ENCODE measurements at regions of chr9 and their contacts with region 1.

Region 1: DNA sequence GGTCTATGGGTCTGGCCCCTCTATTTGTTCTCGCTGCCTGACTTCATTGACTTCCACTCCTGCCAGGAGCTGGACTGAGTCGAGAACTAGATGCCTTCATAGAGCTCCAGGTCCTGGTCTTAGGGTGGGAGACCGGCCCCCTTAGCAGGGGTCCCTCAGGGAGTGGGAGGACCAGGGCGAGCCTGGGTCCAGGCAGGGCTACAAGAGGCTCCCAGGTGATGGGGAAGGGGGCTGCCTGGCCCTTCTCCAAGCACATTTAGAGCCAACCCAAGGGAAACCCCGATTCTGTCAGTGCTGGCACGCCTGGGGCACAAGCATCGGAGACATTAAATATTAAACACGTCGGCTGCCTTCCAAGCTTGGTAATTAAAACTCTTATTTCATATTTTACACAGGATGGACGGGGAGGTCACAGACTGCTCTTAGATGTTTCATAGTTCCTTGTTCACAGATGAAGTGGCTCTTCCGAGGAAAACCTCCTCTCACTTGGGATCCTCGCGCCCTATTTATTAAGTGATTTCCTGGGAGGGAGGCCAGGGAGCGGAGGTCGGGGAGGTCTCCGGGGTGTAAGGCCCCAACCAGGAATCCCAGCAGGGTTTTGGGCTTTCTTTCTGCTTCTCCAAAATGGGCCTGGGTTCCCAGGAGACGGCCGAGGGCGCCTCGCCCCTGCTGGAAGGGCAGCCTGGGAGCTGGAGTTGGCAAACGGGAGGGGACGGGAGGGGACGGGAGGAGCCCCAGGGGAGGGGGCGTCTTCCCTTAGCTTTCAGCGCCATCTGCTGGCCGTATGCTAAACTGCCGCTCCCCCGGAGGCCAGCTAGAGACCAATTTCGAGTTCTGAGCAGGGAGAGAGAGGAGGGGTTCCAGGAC is 23.4 kb upstream of the ZBTB43 start:
- DNase-seq: peak; percentile 82 to 91
- ATAC-seq: peak; percentile 81 to 90 (median 86)
- H3K4me3 ChIP-seq: peak overlapping the region; percentile 35
- H3K27ac ChIP-seq: no peak overlapping the region
- H3K4me1 ChIP-seq: peaks cover 20% of the 10 kb centered on the region
- H3K27me3 ChIP-seq: peaks cover 0 to 22% (median 0%) of the 10 kb centered on the region in 3 donors
- CTCF ChIP-seq: peak; percentile 95

Region 2: DNA sequence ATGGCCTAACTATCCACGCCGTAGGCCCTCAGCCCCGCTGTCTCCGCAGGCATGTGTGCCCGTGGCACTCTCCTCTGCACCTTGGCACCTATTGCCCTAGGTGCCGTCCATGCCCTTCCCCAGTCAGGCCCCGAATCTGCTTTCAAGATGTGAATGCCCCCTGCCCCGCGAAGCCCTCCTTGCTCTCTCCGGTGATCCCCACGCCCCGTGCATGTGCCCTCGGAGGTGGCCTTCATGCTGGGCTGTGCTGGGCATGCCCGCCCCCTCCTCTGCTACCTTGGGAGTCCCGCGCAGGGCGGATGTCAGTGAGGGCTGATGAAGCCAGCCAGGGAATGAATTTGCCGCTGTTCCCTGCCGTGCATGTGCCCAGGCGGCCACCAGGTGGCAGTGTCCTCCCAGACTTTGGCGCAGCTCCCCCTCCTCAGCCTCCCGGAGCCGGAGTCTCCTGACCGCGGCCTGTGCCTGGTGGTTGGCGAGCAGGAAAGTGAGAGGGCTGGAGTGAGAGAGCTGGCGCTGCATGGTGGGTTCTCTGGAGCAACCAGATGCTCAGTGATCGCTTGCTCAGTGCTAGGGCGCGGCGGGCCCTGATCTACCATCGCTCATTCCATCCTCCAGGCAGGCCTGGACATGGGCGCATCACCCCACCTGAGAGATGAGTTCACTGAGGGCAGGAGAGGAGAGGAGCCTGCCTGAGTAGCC is 280.6 kb before region 1 on chr9:
- intact Hi-C with region 1: loop called in 1 of 2 experiments (anchors 2 kb)
- DNase-seq: peak; percentile 75 to 86
- ATAC-seq: peak; percentile 76 to 86 (median 78)
- H3K4me3 ChIP-seq: no peak overlapping the region
- H3K27ac ChIP-seq: no peak overlapping the region
- H3K4me1 ChIP-seq: no peaks in the 10 kb centered on the region
- H3K27me3 ChIP-seq: no peaks in the 10 kb centered on the region
- CTCF ChIP-seq: peak; percentile 96

Region 3: GRCh38 chr9:126611592-126612325 is 169.7 kb before region 1 on chr9:
- intact Hi-C with region 1: loop called (anchors 2 kb)
- DNase-seq: peak; percentile 77 to 87
- ATAC-seq: peak; percentile 86 to 94 (median 90)
- H3K4me3 ChIP-seq: peak overlapping the region; percentile 60
- H3K27ac ChIP-seq: no peak overlapping the region
- H3K4me1 ChIP-seq: peaks cover 13% of the 10 kb centered on the region
- H3K27me3 ChIP-seq: peaks cover 3 to 78% (median 42%) of the 10 kb centered on the region in 3 donors
- CTCF ChIP-seq: peak; percentile 85

Region 4: DNA sequence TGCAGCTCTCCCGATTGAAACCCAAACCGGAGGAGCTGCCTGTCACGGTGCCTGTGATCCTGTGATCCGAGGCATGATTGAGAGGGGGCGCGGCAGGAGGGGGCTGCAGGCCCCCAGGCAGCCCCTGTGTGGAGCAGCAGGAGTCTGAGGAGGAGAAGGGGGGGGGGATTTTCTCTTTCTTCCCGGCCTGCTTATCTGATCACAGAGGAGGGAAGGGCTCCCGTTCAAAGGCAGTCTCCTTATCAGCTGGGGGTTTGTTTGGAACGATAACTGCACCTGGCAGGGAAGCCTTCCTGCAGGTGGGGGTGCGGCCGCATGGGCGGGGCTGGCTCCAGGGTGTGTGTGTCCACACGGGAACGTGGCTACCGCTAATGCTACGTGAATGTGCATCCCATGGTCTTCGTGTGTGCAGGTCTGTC is 129.3 kb before region 1 on chr9:
- intact Hi-C with region 1: no loop called
- DNase-seq: no peak
- ATAC-seq: no peak
- H3K4me3 ChIP-seq: no peak overlapping the region
- H3K27ac ChIP-seq: no peak overlapping the region
- H3K4me1 ChIP-seq: no peaks in the 10 kb centered on the region
- H3K27me3 ChIP-seq: peaks cover 0 to 45% (median 9%) of the 10 kb centered on the region in 3 donors
- CTCF ChIP-seq: no peak

Region 5: GRCh38 chr9:126704873-126705766 is 76.3 kb before region 1 on chr9:
- intact Hi-C with region 1: loop called (anchors 1 kb)
- DNase-seq: peak; percentile 81 to 89
- ATAC-seq: peak; percentile 75 to 93 (median 86)
- H3K4me3 ChIP-seq: peak overlapping the region; percentile 57
- H3K27ac ChIP-seq: no peak overlapping the region
- H3K4me1 ChIP-seq: peaks cover 15% of the 10 kb centered on the region
- H3K27me3 ChIP-seq: peaks cover 0 to 38% (median 10%) of the 10 kb centered on the region in 3 donors
- CTCF ChIP-seq: peak; percentile 91